ENCODE measurements at regions of chr3 and their contacts with region 1.

Region 1: DNA sequence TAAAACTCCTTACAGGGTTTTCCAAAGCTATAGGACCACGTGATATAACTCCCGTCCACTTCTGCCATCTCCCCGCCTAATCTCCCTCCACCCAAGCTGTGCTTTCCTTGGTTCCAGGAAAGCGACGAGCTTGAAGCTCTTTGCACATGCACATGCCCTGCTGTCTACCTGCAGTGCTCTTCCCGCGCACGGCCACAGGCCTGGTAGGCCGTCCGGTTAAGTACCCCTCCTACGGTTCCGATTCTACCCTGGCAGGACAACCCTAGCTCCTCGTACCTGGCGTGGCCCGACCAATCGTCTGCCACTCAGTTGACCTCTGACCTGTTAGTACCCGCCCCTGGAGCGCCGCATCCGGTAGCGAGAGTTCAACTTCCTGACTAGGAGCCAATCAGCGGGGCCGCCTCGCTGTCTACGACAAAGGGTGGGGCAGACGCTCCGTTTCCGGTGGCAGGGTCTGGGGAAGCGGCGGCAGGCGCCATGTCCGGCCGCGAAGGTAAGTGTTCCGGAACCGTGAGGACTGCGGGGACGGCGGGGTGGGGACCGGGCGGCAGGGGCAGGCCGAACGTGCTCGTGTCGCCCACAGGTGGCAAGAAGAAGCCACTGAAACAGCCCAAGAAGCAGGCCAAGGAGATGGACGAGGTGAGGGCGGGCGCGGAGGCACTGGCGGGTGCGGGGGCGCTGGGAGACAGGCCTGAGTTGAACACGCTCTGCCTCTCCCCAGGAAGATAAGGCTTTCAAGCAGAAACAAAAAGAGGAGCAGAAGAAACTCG is at the starts of genes CCDC51 and TMA7:
- DNase-seq: peak; percentile 98
- ATAC-seq: peak; percentile 94
- H3K4me3 ChIP-seq: peak within 1 kb of the TSS; percentile 83 to 94 (median 91)
- H3K4me3 Mint-ChIP-seq: peak within 1 kb of the TSS; percentile 97
- H3K27ac ChIP-seq: peak within 1 kb of the TSS; percentile 85
- H3K27ac Mint-ChIP-seq: peak within 1 kb of the TSS; percentile 92
- H3K4me1 ChIP-seq: peaks cover 19 to 27% of the 10 kb centered on the region in 2 donors
- H3K4me1 Mint-ChIP-seq: peaks cover 35% of the 10 kb centered on the region
- H3K27me3 ChIP-seq: no peaks in the 10 kb centered on the region
- H3K27me3 Mint-ChIP-seq: no peaks in the 10 kb centered on the region
- CTCF ChIP-seq: peak; percentile 37
- total RNA-seq, gene CCDC51: 5.0 and 6.2 TPM in 2 replicates
- total RNA-seq, gene TMA7: 185 and 194 TPM in 2 replicates

Region 2: GRCh38 chr3:48232734-48233133 is 207.3 kb before region 1 on chr3:
- CTCF ChIA-PET with region 1: interaction called, 59 read pairs
- POLR2A ChIA-PET with region 1: no interaction called
- intact Hi-C with region 1: loop called (anchors 1 kb)
- DNase-seq: peak; percentile 74
- ATAC-seq: peak; percentile 99
- H3K4me3 ChIP-seq: peak overlapping the region in 1 of 5 experiments; percentile 33
- H3K4me3 Mint-ChIP-seq: peak overlapping the region; percentile 56
- H3K27ac ChIP-seq: no peak overlapping the region
- H3K27ac Mint-ChIP-seq: peak overlapping the region; percentile 42
- H3K4me1 ChIP-seq: peaks cover 14 to 27% of the 10 kb centered on the region in 2 donors
- H3K4me1 Mint-ChIP-seq: peaks cover 29% of the 10 kb centered on the region
- H3K27me3 ChIP-seq: no peaks in the 10 kb centered on the region
- H3K27me3 Mint-ChIP-seq: no peaks in the 10 kb centered on the region
- CTCF ChIP-seq: peak; percentile 68

Region 3: DNA sequence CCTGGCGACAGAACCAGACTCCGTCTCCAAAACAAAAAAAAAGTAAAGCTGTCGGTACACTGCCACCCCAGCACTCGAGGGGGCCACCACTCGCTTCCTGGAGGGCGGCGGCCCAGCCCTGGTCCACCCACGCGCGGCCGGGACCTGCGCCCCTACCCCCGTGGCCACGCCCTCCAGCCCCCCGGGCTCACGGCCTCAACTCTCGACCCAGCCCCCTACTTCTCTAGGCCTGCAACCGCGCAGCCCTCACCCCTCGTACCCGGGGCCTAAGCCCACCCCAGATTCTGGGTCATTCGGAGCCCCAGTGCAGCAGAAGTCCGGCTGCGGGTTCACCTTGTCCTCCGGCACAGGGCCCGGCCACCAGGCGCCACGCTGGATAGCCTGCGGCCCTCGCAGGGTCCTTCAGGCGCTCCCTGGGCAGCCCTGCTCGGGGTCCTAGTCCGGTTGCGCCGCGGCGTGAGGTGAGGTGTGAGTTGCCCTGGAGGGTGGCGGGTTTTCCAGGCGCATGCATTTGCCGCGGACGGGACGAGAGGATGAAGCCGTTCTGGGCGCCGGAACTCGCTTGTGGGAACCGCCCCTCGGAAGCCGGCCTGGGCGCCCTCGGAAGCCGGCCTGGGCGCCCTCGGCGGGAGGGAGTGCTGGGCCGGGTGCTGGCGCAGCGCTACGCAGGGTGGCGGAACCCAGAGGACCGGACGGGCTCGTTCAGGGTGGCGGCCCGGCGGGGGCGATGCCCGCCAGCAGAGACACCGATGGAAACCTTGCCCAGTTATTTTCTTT is 138.8 kb before region 1 on chr3:
- CTCF ChIA-PET with region 1: interaction called, 20 read pairs
- POLR2A ChIA-PET with region 1: interaction called, 4 read pairs
- intact Hi-C with region 1: loop called (anchors 10 kb)
- DNase-seq: peak; percentile 94
- ATAC-seq: peak; percentile 91
- H3K4me3 ChIP-seq: peak within 1 kb of the TSS; percentile 41 to 90 (median 82)
- H3K4me3 Mint-ChIP-seq: peak within 1 kb of the TSS; percentile 97
- H3K27ac ChIP-seq: peak within 1 kb of the TSS; percentile 92 to 96
- H3K27ac Mint-ChIP-seq: peak within 1 kb of the TSS; percentile 99
- H3K4me1 ChIP-seq: peaks cover 17 to 25% of the 10 kb centered on the region in 2 donors
- H3K4me1 Mint-ChIP-seq: peaks cover 55% of the 10 kb centered on the region
- H3K27me3 ChIP-seq: no peaks in the 10 kb centered on the region
- H3K27me3 Mint-ChIP-seq: no peaks in the 10 kb centered on the region
- CTCF ChIP-seq: no peak

Region 4: GRCh38 chr3:48422270-48422669 is 17.7 kb before region 1 on chr3:
- CTCF ChIA-PET with region 1: interaction called, 16 read pairs
- POLR2A ChIA-PET with region 1: no interaction called
- intact Hi-C with region 1: no loop called
- DNase-seq: no peak
- ATAC-seq: no peak
- H3K4me3 ChIP-seq: no peak overlapping the region
- H3K4me3 Mint-ChIP-seq: no peak overlapping the region
- H3K27ac ChIP-seq: no peak overlapping the region
- H3K27ac Mint-ChIP-seq: no peak overlapping the region
- H3K4me1 ChIP-seq: no peaks in the 10 kb centered on the region
- H3K4me1 Mint-ChIP-seq: no peaks in the 10 kb centered on the region
- H3K27me3 ChIP-seq: no peaks in the 10 kb centered on the region
- H3K27me3 Mint-ChIP-seq: peaks cover 4% of the 10 kb centered on the region
- CTCF ChIP-seq: no peak

Region 5: GRCh38 chr3:48472915-48473616 is 33.1 kb after region 1 on chr3:
- CTCF ChIA-PET with region 1: interaction called, 31 read pairs
- POLR2A ChIA-PET with region 1: interaction called, 22 read pairs
- intact Hi-C with region 1: loop called (anchors 1 kb)
- DNase-seq: peak; percentile 98
- ATAC-seq: peak; percentile 91
- H3K4me3 ChIP-seq: peak overlapping the region; percentile 59 to 95 (median 74)
- H3K4me3 Mint-ChIP-seq: peak overlapping the region; percentile 93
- H3K27ac ChIP-seq: peak overlapping the region; percentile 96 to 99
- H3K27ac Mint-ChIP-seq: peak overlapping the region; percentile 99
- H3K4me1 ChIP-seq: peaks cover 62 to 76% of the 10 kb centered on the region in 2 donors
- H3K4me1 Mint-ChIP-seq: peaks cover 66% of the 10 kb centered on the region
- H3K27me3 ChIP-seq: no peaks in the 10 kb centered on the region
- H3K27me3 Mint-ChIP-seq: no peaks in the 10 kb centered on the region
- CTCF ChIP-seq: peak; percentile 56

Region 6: DNA sequence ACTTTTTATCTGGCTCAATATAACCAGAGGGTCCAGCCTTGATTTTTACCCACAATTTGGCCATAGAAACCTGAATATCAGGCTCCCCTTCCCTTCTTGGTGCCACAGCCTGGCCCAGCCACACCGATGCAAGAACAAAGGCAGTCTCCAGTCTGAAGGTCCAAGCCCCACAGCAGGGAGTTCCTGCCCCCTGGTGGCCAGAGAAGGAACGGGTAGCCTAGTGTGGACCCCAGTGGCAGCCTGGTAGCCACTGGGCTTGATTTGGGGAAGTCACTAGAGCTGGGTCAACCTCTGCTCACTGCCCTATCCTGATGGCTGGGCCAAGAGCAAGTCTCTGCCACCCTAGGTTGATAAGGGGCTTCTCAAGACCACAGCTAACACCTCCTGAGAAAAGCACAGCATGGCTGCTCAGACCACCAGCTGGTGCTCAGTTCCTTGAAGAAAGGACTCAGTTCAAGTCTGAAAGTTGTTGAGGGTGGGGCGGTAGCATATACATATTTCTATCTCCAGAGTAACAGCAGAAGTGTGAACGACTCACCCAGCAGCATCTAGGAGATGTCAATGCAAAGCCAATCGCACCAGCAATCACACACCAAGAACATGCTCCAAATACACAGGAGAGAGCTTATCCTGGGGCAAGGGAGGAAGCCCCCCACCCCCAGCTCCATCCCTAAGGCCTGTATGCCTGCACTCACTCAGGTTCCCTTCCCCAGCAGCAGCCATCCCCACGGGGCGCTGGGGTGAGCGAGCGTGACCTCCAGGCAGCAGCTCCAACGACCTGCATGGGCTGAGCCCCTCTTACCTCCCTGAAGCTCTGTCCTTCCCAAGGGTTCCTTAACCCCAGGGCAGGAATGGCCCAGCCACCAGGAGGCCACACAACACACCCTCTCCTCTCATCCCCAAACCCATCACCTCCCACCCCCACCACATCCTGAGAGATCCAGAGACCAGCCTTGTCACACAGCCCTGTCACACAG is 109.0 kb after region 1 on chr3:
- CTCF ChIA-PET with region 1: interaction called, 34 read pairs
- POLR2A ChIA-PET with region 1: no interaction called
- intact Hi-C with region 1: no loop called
- DNase-seq: peak; percentile 81
- ATAC-seq: peak; percentile 97
- H3K4me3 ChIP-seq: no peak overlapping the region
- H3K4me3 Mint-ChIP-seq: no peak overlapping the region
- H3K27ac ChIP-seq: no peak overlapping the region
- H3K27ac Mint-ChIP-seq: no peak overlapping the region
- H3K4me1 ChIP-seq: peaks cover 0 to 2% of the 10 kb centered on the region in 2 donors
- H3K4me1 Mint-ChIP-seq: no peaks in the 10 kb centered on the region
- H3K27me3 ChIP-seq: no peaks in the 10 kb centered on the region
- H3K27me3 Mint-ChIP-seq: no peaks in the 10 kb centered on the region
- CTCF ChIP-seq: peak; percentile 85

Region 7: GRCh38 chr3:48588230-48588629 is 148.2 kb after region 1 on chr3:
- CTCF ChIA-PET with region 1: no interaction called
- POLR2A ChIA-PET with region 1: no interaction called
- intact Hi-C with region 1: no loop called
- DNase-seq: no peak
- ATAC-seq: no peak
- H3K4me3 ChIP-seq: no peak overlapping the region
- H3K4me3 Mint-ChIP-seq: no peak overlapping the region
- H3K27ac ChIP-seq: no peak overlapping the region
- H3K27ac Mint-ChIP-seq: no peak overlapping the region
- H3K4me1 ChIP-seq: no peaks in the 10 kb centered on the region
- H3K4me1 Mint-ChIP-seq: no peaks in the 10 kb centered on the region
- H3K27me3 ChIP-seq: peaks cover 0 to 18% (median 1%) of the 10 kb centered on the region in 4 experiments
- H3K27me3 Mint-ChIP-seq: peaks cover 38% of the 10 kb centered on the region
- CTCF ChIP-seq: no peak